MCF 10A (cell line): ENCODE measurements at regions of chr2 and their contacts with region 1.

Region 1: GRCh38 chr2:235746257-235747084 is 252.6 kb downstream of the AGAP1 start:
- DNase-seq: peak; percentile 90
- H3K4me3 Mint-ChIP-seq: peak overlapping the region; percentile 72
- H3K27ac Mint-ChIP-seq: peak overlapping the region; percentile 93
- H3K4me1 Mint-ChIP-seq: peaks cover 42% of the 10 kb centered on the region
- H3K27me3 Mint-ChIP-seq: no peaks in the 10 kb centered on the region
- CTCF ChIP-seq: peak; percentile 74

Region 2: DNA sequence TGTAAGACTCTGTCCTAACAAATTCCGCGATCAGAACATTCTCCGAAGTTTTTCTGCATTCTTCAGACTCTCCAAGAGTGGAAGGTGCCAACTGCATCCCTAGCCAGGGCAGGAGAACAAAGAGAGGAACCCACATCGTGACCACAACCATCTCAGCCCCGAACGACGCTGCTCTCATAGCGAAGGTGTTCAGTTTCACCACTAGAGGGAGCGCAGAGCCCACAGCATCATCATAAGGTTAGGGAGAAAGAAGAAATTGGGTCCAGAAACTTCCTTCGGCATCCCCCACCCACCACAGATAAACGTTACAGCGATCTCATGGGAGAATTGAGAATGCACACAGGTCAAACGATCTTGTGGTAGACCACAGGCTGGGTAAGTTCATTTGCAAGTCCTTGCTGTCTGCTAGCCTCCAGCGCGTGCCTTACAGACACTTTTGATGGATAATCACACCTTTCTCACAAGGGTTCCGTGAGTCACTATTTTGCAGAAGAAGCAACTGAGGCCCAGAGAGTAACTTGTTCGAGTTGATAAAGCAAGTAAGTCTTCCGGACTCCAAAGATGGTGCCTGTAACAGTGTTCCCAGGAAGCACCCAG is 1195.9 kb before region 1 on chr2:
- CTCF ChIA-PET with region 1: interaction called, 4 read pairs
- POLR2A ChIA-PET with region 1: no interaction called
- intact Hi-C with region 1: loop called (anchors 10 kb)
- DNase-seq: peak; percentile 77
- H3K4me3 Mint-ChIP-seq: no peak overlapping the region
- H3K27ac Mint-ChIP-seq: no peak overlapping the region
- H3K4me1 Mint-ChIP-seq: peaks cover 5% of the 10 kb centered on the region
- H3K27me3 Mint-ChIP-seq: no peaks in the 10 kb centered on the region
- CTCF ChIP-seq: peak; percentile 90

Region 3: GRCh38 chr2:235433860-235434259 is 312.6 kb before region 1 on chr2:
- CTCF ChIA-PET with region 1: no interaction called
- POLR2A ChIA-PET with region 1: no interaction called
- intact Hi-C with region 1: loop called (anchors 10 kb)
- DNase-seq: peak; percentile 31
- H3K4me3 Mint-ChIP-seq: no peak overlapping the region
- H3K27ac Mint-ChIP-seq: no peak overlapping the region
- H3K4me1 Mint-ChIP-seq: peaks cover 5% of the 10 kb centered on the region
- H3K27me3 Mint-ChIP-seq: peaks cover 50% of the 10 kb centered on the region
- CTCF ChIP-seq: no peak

Region 4: DNA sequence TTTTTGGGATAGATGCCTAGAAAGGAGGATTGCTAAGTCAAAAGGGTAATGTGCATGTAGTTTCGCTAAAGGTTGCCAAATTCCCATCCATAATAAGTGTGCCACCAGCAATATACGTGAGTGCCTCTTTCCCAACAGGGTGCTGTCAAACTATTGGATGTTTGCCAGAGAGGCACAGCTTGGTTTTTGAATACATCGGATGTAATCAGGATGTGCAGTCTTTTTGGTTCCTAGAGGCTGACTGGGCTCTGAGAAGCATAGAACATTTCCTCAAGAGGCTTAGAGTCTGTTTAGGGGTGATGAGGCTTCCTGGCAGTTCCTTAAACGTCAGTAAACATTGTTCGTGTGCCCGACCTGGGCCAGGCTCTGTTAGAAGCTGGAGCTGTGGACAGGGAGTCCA is 224.6 kb before region 1 on chr2:
- CTCF ChIA-PET with region 1: no interaction called
- POLR2A ChIA-PET with region 1: no interaction called
- intact Hi-C with region 1: no loop called
- DNase-seq: peak; percentile 94
- H3K4me3 Mint-ChIP-seq: no peak overlapping the region
- H3K27ac Mint-ChIP-seq: no peak overlapping the region
- H3K4me1 Mint-ChIP-seq: peaks cover 19% of the 10 kb centered on the region
- H3K27me3 Mint-ChIP-seq: no peaks in the 10 kb centered on the region
- CTCF ChIP-seq: no peak

Region 5: DNA sequence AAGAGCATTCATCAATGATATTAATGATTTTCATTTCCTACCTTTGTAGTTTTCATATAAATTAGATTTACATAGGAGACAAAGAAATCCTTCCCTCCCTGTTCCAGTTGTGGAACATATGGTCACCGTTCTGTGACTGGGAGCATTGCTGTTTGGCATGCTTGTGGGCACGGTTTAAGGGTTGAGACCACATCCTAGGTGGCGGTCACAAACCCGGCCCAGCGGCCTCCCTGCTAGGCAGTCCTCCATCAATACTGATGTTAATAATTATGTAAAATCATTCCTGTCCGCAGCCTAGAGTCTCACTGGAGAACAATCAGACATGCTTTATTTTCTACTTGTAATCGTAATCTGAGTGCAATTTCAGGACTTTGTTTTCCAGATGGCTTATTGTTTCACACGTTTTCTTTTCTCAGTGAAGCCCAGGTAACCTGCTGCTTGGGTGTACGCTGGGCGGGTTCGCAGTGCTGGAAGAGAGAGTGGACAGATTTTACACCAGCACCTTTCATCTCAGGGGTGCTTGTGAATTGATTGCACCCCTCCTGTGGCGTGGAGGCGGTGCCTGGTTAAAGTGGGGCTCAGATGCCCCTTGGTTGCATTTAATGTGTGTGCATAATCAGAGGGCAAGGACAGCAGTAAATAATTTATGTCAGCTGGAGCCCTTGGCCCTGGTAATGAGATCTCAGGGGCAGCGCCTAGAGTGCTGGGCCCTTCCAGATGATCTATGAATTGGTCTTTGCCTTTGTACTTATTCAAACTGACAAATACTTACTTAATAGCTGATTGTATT is 134.5 kb before region 1 on chr2:
- CTCF ChIA-PET with region 1: interaction called, 11 read pairs
- POLR2A ChIA-PET with region 1: interaction called, 3 read pairs
- intact Hi-C with region 1: no loop called
- DNase-seq: no peak
- H3K4me3 Mint-ChIP-seq: no peak overlapping the region
- H3K27ac Mint-ChIP-seq: no peak overlapping the region
- H3K4me1 Mint-ChIP-seq: peaks cover 7% of the 10 kb centered on the region
- H3K27me3 Mint-ChIP-seq: no peaks in the 10 kb centered on the region
- CTCF ChIP-seq: no peak

Region 6: DNA sequence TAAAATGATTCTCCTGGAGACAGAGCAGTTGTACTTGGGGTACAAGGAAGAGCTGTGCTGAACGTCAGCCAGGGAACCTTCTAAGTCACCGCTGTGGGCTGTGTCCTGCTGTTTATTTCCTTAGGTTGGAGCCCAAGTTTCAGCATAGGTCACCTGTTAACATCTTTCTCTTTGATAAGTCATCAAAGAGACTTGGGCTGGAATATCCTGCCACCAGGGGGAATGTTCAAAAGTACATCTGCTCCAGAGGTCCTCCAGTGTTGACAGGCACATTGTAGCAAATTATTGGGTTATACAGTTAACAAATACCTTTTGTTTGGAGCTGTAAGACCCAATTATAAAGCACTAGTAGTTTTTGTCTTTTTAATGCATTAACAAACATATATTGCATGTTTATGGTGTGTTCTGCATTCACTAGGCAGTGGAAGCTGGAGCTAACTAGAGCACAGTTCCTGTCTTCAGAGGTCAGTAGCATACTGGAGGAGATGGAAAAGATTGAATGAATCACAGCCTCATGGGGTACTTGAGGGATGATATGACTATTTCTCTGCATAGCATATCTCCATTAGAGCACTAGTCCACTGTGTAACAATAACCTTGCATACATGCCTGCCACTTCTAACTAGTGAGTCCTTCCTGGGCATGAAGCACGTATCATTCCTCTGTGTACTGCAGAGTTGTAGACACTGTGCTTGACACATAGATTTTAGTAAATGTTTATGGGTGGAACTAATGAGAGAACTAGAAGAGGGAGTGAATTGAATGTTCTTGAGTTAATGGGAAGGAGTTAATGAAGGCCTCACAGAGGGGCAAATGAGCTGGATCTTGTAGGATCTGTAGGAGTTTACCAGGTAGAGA is 70.6 kb before region 1 on chr2:
- CTCF ChIA-PET with region 1: interaction called, 16 read pairs
- POLR2A ChIA-PET with region 1: interaction called, 4 read pairs
- intact Hi-C with region 1: no loop called
- DNase-seq: peak; percentile 15
- H3K4me3 Mint-ChIP-seq: peak overlapping the region; percentile 34
- H3K27ac Mint-ChIP-seq: peak overlapping the region; percentile 65
- H3K4me1 Mint-ChIP-seq: peaks cover 64% of the 10 kb centered on the region
- H3K27me3 Mint-ChIP-seq: no peaks in the 10 kb centered on the region
- CTCF ChIP-seq: no peak

Region 7: GRCh38 chr2:235734688-235735231 is 11.7 kb before region 1 on chr2:
- CTCF ChIA-PET with region 1: interaction called, 10 read pairs
- POLR2A ChIA-PET with region 1: interaction called, 16 read pairs
- intact Hi-C with region 1: no loop called
- DNase-seq: no peak
- H3K4me3 Mint-ChIP-seq: no peak overlapping the region
- H3K27ac Mint-ChIP-seq: no peak overlapping the region
- H3K4me1 Mint-ChIP-seq: peaks cover 22% of the 10 kb centered on the region
- H3K27me3 Mint-ChIP-seq: no peaks in the 10 kb centered on the region
- CTCF ChIP-seq: no peak

Region 8: GRCh38 chr2:235951982-235952381 is 205.5 kb after region 1 on chr2:
- CTCF ChIA-PET with region 1: no interaction called
- POLR2A ChIA-PET with region 1: no interaction called
- intact Hi-C with region 1: no loop called
- DNase-seq: no peak
- H3K4me3 Mint-ChIP-seq: no peak overlapping the region
- H3K27ac Mint-ChIP-seq: no peak overlapping the region
- H3K4me1 Mint-ChIP-seq: no peaks in the 10 kb centered on the region
- H3K27me3 Mint-ChIP-seq: no peaks in the 10 kb centered on the region
- CTCF ChIP-seq: no peak